ENCODE measurements at regions of chr12 and their contacts with region 1.

Region 1: DNA sequence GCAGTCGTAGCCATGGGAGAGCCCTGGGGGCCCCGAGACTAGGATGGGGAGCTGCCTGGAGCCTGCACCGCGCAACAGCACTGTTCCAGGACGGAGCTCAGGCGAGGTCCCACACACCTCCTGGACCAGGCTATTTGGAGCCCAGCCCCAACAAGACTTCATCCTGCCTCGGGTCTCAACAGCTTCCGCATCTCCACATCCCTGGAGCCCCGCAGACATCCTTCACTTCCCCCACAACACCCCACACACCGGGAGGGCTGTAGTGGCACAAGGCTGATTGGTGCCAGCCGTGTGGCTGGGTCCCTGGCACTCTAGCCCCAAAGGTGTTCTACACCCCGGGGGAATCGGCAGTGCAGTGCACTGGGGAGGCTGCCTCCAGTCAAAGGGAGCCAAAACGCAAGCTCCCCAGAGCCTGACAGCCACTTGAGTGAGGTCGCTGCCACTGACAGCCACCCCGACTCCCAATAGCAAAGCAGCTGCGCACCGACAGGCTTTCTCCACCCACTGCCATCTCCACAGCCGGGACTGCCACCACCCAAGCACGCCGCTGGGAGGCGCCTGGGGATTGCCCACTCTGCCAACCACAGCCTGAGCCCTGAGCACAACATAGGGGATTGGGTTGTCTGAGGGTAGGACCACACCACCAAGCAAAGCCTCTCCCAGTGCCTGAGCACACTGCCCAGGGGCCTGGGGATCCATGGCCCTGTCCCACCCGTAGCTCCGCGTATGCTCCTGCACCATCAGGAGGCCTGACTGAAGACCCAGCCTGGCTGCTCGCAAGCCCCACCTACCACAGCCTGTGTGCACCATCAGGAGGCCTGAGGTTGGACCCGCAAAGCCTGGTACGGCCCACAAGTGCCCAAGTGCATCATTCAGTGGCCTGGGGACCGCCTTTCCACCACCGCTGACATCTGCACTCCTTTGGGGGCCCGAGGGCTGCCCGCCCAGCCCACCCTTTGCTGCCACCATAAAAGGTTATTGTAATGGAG is 13.2 kb upstream of the KLRF1 start:
- DNase-seq: peak; percentile 85 to 98 (median 94)
- ATAC-seq: peak; percentile 99
- H3K4me3 ChIP-seq: peak overlapping the region; percentile 70
- H3K4me3 Mint-ChIP-seq: peak overlapping the region; percentile 85 to 97 (median 92)
- H3K27ac ChIP-seq: peak overlapping the region; percentile 71
- H3K27ac Mint-ChIP-seq: peak overlapping the region; percentile 75 to 97 (median 90)
- H3K4me1 ChIP-seq: no peaks in the 10 kb centered on the region
- H3K4me1 Mint-ChIP-seq: peaks cover 9 to 30% (median 14%) of the 10 kb centered on the region in 7 donors
- H3K27me3 ChIP-seq: no peaks in the 10 kb centered on the region
- H3K27me3 Mint-ChIP-seq: peaks cover 0 to 35% (median 5%) of the 10 kb centered on the region in 5 donors

Region 2: DNA sequence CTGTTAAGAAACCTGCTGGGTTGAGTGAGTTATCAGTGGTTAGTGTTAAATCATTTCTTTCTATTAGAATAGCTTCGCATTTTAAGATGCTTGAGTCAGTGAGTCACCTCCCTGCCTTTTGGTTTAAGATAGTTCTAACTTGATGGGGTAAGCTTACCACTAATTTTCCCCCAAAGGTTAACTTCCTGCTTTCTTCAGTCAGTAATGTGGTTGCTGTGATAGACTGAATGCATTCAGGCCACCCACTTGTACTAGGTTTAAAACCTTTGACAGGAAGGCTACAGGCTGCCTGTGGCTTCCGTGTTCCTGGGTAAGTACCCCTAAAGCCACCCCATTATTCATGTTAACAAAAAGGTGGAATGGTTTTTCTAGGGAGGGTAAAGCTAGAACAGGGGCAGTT is 92.8 kb after region 1 on chr12:
- CTCF ChIA-PET with region 1: no interaction called
- POLR2A ChIA-PET with region 1: interaction called, 3 read pairs
- intact Hi-C with region 1: loop called in 1 of 2 experiments (anchors 1 kb)
- DNase-seq: peak in 8 of 9 donors; percentile 26 to 68 (median 47)
- ATAC-seq: peak; percentile 96
- H3K4me3 ChIP-seq: no peak overlapping the region
- H3K4me3 Mint-ChIP-seq: peak overlapping the region; percentile 48 to 77 (median 68)
- H3K27ac ChIP-seq: peak overlapping the region; percentile 51
- H3K27ac Mint-ChIP-seq: peak overlapping the region; percentile 74 to 98 (median 83)
- H3K4me1 ChIP-seq: peaks cover 9 to 20% of the 10 kb centered on the region in 2 donors
- H3K4me1 Mint-ChIP-seq: peaks cover 16 to 45% (median 36%) of the 10 kb centered on the region in 7 donors
- H3K27me3 ChIP-seq: no peaks in the 10 kb centered on the region
- H3K27me3 Mint-ChIP-seq: peaks cover 0 to under 1% (median 0%) of the 10 kb centered on the region in 5 donors

Region 3: DNA sequence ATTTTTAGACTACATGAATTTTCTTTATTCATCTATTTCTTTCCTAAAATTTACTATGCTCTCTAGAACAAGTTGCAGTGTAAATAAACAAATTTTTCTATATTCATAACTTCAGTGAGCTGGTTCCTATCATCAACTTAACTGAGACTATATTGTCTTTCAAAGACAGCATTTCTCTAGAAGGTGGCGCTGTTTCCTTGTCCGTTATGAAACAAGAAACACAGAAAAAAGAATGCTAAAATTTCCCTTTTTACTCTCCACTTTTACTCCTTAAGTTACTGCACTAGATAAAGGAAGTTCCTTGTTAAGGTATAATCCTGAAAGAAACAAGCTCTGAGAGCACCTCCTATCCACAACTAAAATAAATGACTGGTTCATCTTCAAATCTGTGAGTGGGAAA is 126.3 kb after region 1 on chr12:
- CTCF ChIA-PET with region 1: interaction called, 6 read pairs
- POLR2A ChIA-PET with region 1: interaction called, 3 read pairs
- intact Hi-C with region 1: loop called (anchors 5 kb)
- DNase-seq: peak in 3 of 9 donors; percentile 20 to 36 (median 24)
- ATAC-seq: no peak
- H3K4me3 ChIP-seq: no peak overlapping the region
- H3K4me3 Mint-ChIP-seq: no peak overlapping the region
- H3K27ac ChIP-seq: no peak overlapping the region
- H3K27ac Mint-ChIP-seq: peak overlapping the region in 2 of 9 donors; percentile 8 to 32
- H3K4me1 ChIP-seq: no peaks in the 10 kb centered on the region
- H3K4me1 Mint-ChIP-seq: peaks cover 7 to 27% (median 14%) of the 10 kb centered on the region in 7 donors
- H3K27me3 ChIP-seq: no peaks in the 10 kb centered on the region
- H3K27me3 Mint-ChIP-seq: peaks cover 0 to 34% (median 0%) of the 10 kb centered on the region in 5 donors

Region 4: GRCh38 chr12:10140001-10140400 is 325.9 kb after region 1 on chr12:
- CTCF ChIA-PET with region 1: interaction called, 13 read pairs
- POLR2A ChIA-PET with region 1: no interaction called
- intact Hi-C with region 1: loop called (anchors 1 kb)
- DNase-seq: peak in 7 of 9 donors; percentile 26 to 66 (median 49)
- ATAC-seq: peak; percentile 72
- H3K4me3 ChIP-seq: no peak overlapping the region
- H3K4me3 Mint-ChIP-seq: no peak overlapping the region
- H3K27ac ChIP-seq: no peak overlapping the region
- H3K27ac Mint-ChIP-seq: no peak overlapping the region
- H3K4me1 ChIP-seq: no peaks in the 10 kb centered on the region
- H3K4me1 Mint-ChIP-seq: peaks cover 0 to 3% (median 0%) of the 10 kb centered on the region in 7 donors
- H3K27me3 ChIP-seq: no peaks in the 10 kb centered on the region
- H3K27me3 Mint-ChIP-seq: peaks cover 0 to 51% (median 0%) of the 10 kb centered on the region in 5 donors

Measured in naive thymus-derived CD4-positive, alpha-beta T cell (primary cell).